ENCODE measurements at regions of chr4 and their contacts with region 1.

Region 1: GRCh38 chr4:183659029-183659871 is at the starts of genes RWDD4 and TRAPPC11:
- DNase-seq: peak; percentile 97
- H3K4me3 Mint-ChIP-seq: peak within 1 kb of the TSS; percentile 91
- H3K27ac Mint-ChIP-seq: peak within 1 kb of the TSS; percentile 89
- H3K4me1 Mint-ChIP-seq: peaks cover 34% of the 10 kb centered on the region
- H3K27me3 Mint-ChIP-seq: no peaks in the 10 kb centered on the region
- total RNA-seq, gene RWDD4: 13.0 to 15.3 TPM
- total RNA-seq, gene TRAPPC11: 29.7 to 36.1 TPM

Region 2: DNA sequence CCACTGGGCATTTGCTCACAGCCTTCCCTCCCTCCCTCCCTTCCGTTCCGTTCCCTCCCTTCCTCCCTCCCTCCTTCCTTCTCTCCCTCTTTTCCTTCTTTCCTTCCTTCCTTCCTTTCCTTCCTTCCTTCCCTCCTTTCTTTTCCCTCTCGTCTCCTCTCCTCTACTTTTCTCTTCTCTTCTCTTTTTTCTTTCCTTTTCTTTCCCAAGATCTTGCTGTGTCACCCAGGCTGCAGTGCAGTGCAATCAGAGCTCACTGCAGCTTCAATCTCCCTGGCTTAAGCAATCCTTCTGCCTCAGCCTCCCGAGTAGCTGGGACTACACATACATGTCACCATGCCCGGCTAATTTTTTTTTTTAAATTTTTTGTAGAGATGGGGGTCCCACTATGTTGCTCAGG is 181.1 kb before region 1 on chr4:
- CTCF ChIA-PET with region 1: no interaction called
- POLR2A ChIA-PET with region 1: no interaction called
- DNase-seq: no peak
- H3K4me3 Mint-ChIP-seq: no peak overlapping the region
- H3K27ac Mint-ChIP-seq: no peak overlapping the region
- H3K4me1 Mint-ChIP-seq: no peaks in the 10 kb centered on the region
- H3K27me3 Mint-ChIP-seq: peaks cover 2% of the 10 kb centered on the region

Region 3: DNA sequence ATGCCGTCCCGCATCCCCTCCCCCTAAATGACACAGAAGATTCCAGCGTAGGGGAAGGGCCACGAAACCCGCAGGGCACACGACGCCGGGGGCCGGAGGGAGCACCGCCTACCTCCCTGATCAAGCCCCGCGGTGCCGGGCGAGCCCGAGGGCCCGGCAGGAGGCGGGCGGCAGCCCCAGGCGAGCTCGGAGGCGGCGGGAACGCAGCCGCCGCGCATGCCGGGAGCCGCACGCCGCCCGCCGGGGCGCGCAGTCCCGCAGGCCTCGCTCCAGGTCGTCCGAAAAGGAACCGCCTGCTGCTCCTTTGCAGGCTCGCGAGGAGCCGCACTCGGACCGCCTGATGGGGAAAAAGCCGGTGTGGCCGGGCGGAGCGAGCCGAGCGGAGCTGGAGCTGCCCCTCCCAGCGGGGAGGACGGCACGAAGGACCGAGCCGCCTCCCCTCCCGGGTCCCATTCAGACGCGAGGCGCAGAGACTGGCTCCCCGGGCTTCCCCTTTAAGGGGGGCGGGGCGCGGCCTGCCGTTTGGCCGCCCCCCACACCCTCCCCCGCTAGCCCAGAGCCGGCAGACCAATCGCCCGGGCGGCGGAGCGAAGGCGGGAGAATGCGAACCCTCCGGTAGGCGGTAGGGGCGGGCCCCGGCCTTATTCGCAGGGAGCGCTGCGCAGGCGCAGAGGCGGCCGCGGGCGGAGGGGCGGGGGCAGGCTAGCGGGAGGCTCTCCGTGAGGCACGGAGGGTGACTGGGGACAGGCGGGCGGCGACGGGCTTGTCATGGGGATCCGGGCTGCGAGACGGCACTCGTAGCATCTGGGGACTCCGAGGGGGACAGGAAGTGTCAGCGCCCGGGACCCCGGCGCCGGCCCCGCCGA is 155.0 kb before region 1 on chr4:
- CTCF ChIA-PET with region 1: no interaction called
- POLR2A ChIA-PET with region 1: interaction called, 17 read pairs
- DNase-seq: peak; percentile 99
- H3K4me3 Mint-ChIP-seq: peak overlapping the region; percentile 93
- H3K27ac Mint-ChIP-seq: peak overlapping the region; percentile 93
- H3K4me1 Mint-ChIP-seq: peaks cover 46% of the 10 kb centered on the region
- H3K27me3 Mint-ChIP-seq: no peaks in the 10 kb centered on the region

Region 4: DNA sequence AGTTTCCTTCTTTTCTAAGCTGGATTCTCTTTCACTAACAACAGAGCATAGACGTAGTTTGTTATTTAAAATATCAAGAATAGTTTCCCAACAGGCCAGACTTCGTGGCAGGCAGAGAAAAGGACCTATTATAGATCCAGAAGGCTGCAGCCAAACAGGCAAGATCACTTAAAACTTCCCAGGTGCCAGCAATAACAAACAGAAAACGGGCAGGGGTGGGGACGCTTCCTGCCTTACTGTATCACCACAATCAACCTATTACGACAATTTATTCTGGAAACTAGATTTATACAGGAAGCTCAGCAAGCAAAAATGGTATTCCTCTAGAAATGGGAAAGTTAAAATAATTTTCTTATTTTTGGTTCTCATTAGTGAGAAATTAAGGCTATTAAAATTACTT is 22.3 kb before region 1 on chr4:
- CTCF ChIA-PET with region 1: no interaction called
- POLR2A ChIA-PET with region 1: interaction called, 11 read pairs
- DNase-seq: no peak
- H3K4me3 Mint-ChIP-seq: no peak overlapping the region
- H3K27ac Mint-ChIP-seq: no peak overlapping the region
- H3K4me1 Mint-ChIP-seq: peaks cover 17% of the 10 kb centered on the region
- H3K27me3 Mint-ChIP-seq: peaks cover 1% of the 10 kb centered on the region